Activated T-helper 2 cell treated with anti-CD3 and anti-CD28 coated beads, Interferon-gamma antibody, Interleukin-2, Interleukin-4, amounts not matched to agents 10 μg/mL and 5 μg/mL and 100 μg/mL, durations not matched to agents 14 hours and 24 hours and 36 hours (primary cell): ENCODE measurements at regions of chr6 and their contacts with region 1.

Region 1: DNA sequence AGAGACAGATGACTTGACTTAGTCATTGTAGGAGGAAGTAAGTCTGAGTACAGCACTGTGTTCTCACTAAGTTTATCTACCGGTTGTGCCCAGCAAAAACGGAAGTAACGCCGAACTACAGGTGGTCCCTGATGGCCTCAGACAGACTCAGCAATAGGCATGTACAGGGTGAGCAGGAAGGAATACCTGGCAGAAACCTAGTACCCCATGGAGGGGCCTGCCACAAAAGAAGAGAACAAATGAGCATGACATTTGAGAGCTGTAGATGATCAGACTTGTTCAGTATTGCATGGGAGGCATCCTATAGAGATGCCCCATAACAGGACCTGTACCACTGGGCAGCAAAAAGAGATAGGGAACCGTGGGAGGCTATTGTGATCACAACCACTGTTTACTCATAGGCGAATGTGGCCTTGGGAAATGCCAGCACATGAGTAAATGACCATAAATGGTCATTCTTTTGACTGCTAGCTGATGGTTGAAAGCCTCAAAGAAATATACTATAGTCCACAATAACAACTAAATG is 106.4 kb upstream of the TAB2 start:
- DNase-seq: no peak
- H3K4me3 Mint-ChIP-seq: peak overlapping the region; percentile 45
- H3K27ac Mint-ChIP-seq: no peak overlapping the region
- H3K4me1 Mint-ChIP-seq: peaks cover 10% of the 10 kb centered on the region
- H3K27me3 Mint-ChIP-seq: no peaks in the 10 kb centered on the region

Region 2: DNA sequence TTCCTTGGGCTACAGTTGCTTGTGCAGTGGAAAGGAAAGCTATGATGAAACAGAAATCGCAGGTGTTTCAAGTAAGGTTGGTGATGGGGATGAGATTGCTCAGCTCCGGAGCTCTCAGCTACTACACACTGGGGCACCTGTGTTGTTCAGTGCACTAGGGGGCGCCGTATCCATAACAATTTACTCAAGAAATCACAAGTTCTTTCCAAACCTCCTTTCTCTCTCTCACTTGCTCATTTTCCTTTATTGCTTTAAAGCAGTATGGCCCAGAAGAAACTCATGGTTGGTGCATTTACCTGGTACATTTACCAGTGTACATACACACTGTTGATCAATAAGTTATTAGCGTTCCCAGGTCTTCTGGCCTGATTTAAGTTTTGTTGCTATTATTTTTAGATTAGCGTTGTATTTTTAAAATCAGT is 128.8 kb before region 1 on chr6:
- intact Hi-C with region 1: loop called (anchors 1 kb)
- DNase-seq: peak; percentile 79
- H3K4me3 Mint-ChIP-seq: no peak overlapping the region
- H3K27ac Mint-ChIP-seq: peak overlapping the region; percentile 77
- H3K4me1 Mint-ChIP-seq: peaks cover 79% of the 10 kb centered on the region
- H3K27me3 Mint-ChIP-seq: no peaks in the 10 kb centered on the region

Region 3: DNA sequence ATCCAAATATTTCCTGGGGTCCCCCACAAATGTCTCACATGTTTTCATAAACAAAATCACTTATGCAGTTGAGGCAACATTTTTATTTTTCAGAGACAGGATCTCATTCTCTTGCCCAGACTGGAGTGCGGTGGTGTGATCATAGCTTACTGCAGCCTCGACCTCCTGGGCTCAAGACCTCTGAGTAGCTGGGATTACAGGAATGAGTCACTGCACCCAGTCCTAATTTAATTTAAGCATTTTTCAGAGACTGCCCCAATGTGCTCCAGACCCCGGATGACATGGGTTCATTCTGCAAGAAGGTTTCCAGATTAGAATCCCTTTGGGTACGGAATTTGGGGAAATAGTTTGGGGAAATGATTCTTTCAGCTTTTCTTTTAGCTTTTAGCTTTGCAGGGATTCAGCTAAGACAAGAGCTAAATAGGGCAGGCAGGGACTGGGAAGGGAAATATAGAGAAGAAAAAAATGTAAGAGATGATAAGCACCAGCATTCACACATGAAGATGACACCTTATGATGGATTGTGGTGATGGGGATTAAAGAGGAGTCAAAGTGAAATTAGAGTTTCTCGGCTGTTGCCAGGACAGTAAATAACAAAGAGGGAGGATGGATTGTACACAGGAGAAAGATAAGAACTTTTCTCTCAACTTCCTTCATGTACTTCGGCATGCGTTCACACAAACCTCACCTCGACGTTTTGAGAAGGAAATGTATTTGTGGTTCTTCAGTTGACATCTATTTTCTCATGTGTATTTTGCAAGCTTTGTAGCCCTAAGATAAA is 63.0 kb before region 1 on chr6:
- intact Hi-C with region 1: loop called (anchors 1 kb)
- DNase-seq: peak; percentile 41
- H3K4me3 Mint-ChIP-seq: peak overlapping the region; percentile 31
- H3K27ac Mint-ChIP-seq: peak overlapping the region; percentile 97
- H3K4me1 Mint-ChIP-seq: peaks cover 73% of the 10 kb centered on the region
- H3K27me3 Mint-ChIP-seq: no peaks in the 10 kb centered on the region

Region 4: GRCh38 chr6:149293244-149293643 is 82.1 kb after region 1 on chr6:
- intact Hi-C with region 1: no loop called
- DNase-seq: no peak
- H3K4me3 Mint-ChIP-seq: no peak overlapping the region
- H3K27ac Mint-ChIP-seq: no peak overlapping the region
- H3K4me1 Mint-ChIP-seq: peaks cover 7% of the 10 kb centered on the region
- H3K27me3 Mint-ChIP-seq: no peaks in the 10 kb centered on the region

Region 5: DNA sequence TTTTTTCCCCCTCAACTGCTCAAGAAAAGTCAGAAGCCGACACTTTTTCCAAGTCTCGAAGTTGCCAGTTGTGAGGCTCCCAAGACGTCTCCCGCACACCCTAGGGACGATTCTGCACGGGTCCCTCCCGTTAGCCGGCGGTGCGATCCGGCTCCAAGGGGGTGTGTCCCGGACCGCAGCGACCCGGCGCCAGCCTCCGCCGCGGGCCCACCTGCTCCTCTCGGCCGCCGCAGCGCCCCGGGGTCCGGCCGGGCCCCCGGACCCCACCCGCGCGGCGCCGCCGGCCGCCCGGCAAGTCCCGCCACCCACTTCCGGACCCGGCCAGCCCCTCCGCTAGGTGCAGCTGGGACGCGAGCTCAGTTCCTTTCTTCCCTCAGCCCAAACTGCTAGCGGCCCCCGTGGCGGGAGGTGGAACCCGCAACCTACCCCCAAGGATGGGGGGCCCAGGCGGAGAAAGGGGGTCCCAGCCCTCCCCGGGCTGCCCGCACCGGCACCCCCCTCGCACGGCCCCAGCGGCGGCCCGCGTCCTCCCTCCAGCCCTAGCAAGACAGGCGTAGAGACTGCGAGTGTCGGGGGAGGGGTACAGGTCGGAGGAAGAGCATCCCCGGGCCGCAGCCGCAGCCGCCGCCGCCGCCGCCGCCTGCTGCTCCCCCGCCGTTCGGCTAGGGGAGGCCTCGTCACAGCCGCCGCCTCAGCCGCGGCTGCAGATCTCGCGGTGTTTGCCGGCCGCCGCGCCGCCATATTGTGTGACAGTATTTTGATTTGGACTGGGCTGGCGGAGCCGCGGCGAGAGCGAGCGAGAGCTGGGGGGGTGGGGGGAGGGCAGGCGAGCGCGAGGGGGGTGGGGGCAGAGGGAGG is 105.9 kb after region 1 on chr6:
- intact Hi-C with region 1: loop called (anchors 1 kb)
- DNase-seq: peak; percentile 91
- H3K4me3 Mint-ChIP-seq: peak overlapping the region; percentile 95
- H3K27ac Mint-ChIP-seq: peak overlapping the region; percentile 85
- H3K4me1 Mint-ChIP-seq: peaks cover 44% of the 10 kb centered on the region
- H3K27me3 Mint-ChIP-seq: no peaks in the 10 kb centered on the region

Region 6: DNA sequence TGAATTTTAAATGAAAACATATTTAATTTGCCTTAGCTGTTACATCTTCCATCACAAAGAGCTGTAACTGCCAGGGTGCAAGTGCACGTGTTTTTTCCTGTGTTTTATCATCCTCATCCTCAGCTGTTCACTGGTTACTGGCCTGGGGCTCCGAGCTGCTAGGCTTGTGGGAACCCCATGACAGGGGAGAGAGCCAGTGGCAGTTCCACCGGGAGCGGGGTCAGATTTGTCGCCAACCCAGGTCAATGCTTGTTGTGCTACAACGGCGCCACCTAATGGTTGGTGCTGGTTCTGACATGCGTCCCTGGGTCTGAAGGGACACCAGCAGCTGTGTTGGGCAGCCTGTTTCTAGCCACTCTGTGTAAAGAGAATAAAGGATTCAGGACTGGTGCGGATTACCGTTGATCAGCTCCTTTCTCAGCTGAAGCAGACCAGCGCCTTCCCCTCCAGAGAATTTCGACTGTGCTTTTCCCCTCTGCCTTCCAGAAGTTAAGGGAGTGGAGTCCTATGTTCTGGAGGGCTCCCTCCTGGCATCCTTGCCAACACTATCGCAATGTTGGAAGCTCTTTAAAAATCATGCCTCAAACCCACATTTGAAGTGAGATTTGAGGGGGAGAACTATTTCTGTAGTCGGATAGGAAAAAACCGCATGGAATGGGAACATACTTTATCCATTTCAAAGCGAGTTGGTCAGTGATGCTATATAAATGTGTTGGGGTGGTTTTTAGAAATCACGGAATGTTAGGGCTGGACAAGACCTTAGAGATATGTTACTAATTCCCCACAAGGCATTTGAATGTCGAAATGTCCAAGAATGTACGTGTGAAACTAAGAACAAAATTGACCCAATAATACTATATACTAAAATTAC is 221.0 kb after region 1 on chr6:
- intact Hi-C with region 1: loop called (anchors 5 kb)
- DNase-seq: peak; percentile 78
- H3K4me3 Mint-ChIP-seq: no peak overlapping the region
- H3K27ac Mint-ChIP-seq: peak overlapping the region; percentile 64
- H3K4me1 Mint-ChIP-seq: peaks cover 14% of the 10 kb centered on the region
- H3K27me3 Mint-ChIP-seq: no peaks in the 10 kb centered on the region